Calu3 (cell line): ENCODE measurements at regions of chr11 and their contacts with region 1.

Region 1: GRCh38 chr11:122628810-122629555 is 26.5 kb upstream of the UBASH3B start:
- DNase-seq: peak; percentile 70
- H3K4me3 Mint-ChIP-seq: no peak overlapping the region
- H3K27ac Mint-ChIP-seq: no peak overlapping the region
- H3K4me1 Mint-ChIP-seq: no peaks in the 10 kb centered on the region
- H3K27me3 Mint-ChIP-seq: peaks cover 6% of the 10 kb centered on the region
- CTCF ChIP-seq: peak; percentile 65

Region 2: DNA sequence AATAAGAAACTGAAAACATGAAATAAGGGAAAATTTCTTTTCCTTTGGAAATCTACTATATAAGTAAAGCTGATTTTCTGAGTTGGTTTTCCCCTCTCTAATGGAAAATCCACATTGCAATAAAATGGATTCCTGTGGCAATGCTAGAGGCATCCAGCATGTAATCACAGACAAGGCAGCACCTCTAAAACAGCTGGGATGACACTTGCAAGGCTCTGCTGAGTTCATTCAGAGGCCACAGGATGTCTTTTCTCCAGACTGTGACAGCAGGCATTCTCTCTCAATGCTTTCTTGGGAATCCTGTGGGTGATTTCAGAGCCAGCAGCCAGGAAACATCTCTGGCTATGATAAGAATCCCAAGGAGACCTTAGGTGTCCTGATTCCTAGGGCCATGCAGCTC is 311.7 kb before region 1 on chr11:
- CTCF ChIA-PET with region 1: no interaction called
- intact Hi-C with region 1: no loop called
- DNase-seq: no peak
- H3K4me3 Mint-ChIP-seq: no peak overlapping the region
- H3K27ac Mint-ChIP-seq: no peak overlapping the region
- H3K4me1 Mint-ChIP-seq: no peaks in the 10 kb centered on the region
- H3K27me3 Mint-ChIP-seq: peaks cover 23% of the 10 kb centered on the region
- CTCF ChIP-seq: no peak

Region 3: GRCh38 chr11:122398167-122398566 is 230.8 kb before region 1 on chr11:
- CTCF ChIA-PET with region 1: no interaction called
- intact Hi-C with region 1: no loop called
- DNase-seq: no peak
- H3K4me3 Mint-ChIP-seq: no peak overlapping the region
- H3K27ac Mint-ChIP-seq: no peak overlapping the region
- H3K4me1 Mint-ChIP-seq: no peaks in the 10 kb centered on the region
- H3K27me3 Mint-ChIP-seq: peaks cover 27% of the 10 kb centered on the region
- CTCF ChIP-seq: no peak

Region 4: GRCh38 chr11:122517403-122518379 is 111.3 kb before region 1 on chr11:
- CTCF ChIA-PET with region 1: no interaction called
- intact Hi-C with region 1: no loop called
- DNase-seq: no peak
- H3K4me3 Mint-ChIP-seq: no peak overlapping the region
- H3K27ac Mint-ChIP-seq: no peak overlapping the region
- H3K4me1 Mint-ChIP-seq: no peaks in the 10 kb centered on the region
- H3K27me3 Mint-ChIP-seq: peaks cover 28% of the 10 kb centered on the region
- CTCF ChIP-seq: no peak

Region 5: GRCh38 chr11:122781378-122782195 is 152.6 kb after region 1 on chr11:
- CTCF ChIA-PET with region 1: interaction called, 21 read pairs
- intact Hi-C with region 1: loop called (anchors 1 kb)
- DNase-seq: peak; percentile 82
- H3K4me3 Mint-ChIP-seq: no peak overlapping the region
- H3K27ac Mint-ChIP-seq: no peak overlapping the region
- H3K4me1 Mint-ChIP-seq: peaks cover 27% of the 10 kb centered on the region
- H3K27me3 Mint-ChIP-seq: no peaks in the 10 kb centered on the region
- CTCF ChIP-seq: peak; percentile 60